MCF 10A (cell line): ENCODE measurements at regions of chr6 and their contacts with region 1.

Region 1: GRCh38 chr6:43629505-43630300 is 639 bp upstream of the GTPBP2 start:
- DNase-seq: peak; percentile 99
- H3K4me3 Mint-ChIP-seq: peak overlapping the region; percentile 99
- H3K27ac Mint-ChIP-seq: peak overlapping the region; percentile 97
- H3K4me1 Mint-ChIP-seq: peaks cover 34% of the 10 kb centered on the region
- H3K27me3 Mint-ChIP-seq: no peaks in the 10 kb centered on the region
- CTCF ChIP-seq: no peak

Region 2: GRCh38 chr6:43481075-43481474 is 148.6 kb before region 1 on chr6:
- CTCF ChIA-PET with region 1: no interaction called
- POLR2A ChIA-PET with region 1: no interaction called
- intact Hi-C with region 1: no loop called
- DNase-seq: peak; percentile 91
- H3K4me3 Mint-ChIP-seq: peak overlapping the region; percentile 54
- H3K27ac Mint-ChIP-seq: peak overlapping the region; percentile 85
- H3K4me1 Mint-ChIP-seq: peaks cover 29% of the 10 kb centered on the region
- H3K27me3 Mint-ChIP-seq: no peaks in the 10 kb centered on the region
- CTCF ChIP-seq: no peak

Region 3: DNA sequence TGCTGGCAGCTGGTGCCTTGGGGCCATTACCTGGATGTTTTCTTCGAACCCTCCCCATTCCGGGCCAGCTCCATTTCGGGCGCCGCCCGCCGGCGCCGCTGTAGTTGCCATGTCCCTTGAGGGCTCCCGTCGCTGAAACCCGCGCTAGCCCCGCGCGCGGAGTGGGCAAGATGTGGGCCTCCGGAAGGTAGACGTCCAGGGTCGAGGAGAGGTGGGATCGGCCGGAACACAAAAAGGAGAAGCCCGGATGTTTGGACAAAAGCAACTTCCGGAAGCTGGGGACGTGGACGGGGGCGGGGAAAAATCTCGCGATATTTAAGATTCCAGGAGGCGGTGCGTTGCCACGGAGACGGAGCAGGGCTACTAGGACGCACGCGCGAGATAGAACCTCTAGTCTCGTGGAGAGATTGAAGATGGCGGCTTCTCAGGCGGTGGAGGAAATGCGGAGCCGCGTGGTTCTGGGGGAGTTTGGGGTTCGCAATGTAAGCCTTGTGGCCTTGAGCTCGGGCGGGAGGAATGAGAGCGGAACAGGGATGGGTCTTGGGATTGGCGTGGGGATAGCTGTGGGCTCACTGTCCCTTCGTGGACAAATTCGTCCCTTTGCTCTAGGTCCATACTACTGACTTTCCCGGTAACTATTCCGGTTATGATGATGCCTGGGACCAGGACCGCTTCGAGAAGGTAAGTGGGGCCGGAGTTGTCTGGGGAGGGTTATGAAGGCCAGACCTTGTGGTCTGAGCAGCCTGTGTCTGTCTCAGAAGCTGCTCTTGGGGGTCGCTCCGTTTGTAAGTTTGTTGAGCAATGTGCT is 112.8 kb before region 1 on chr6 and contains the starts of genes POLR1C and YIPF3:
- CTCF ChIA-PET with region 1: no interaction called
- POLR2A ChIA-PET with region 1: interaction called, 13 read pairs
- intact Hi-C with region 1: no loop called
- DNase-seq: peak; percentile 98
- H3K4me3 Mint-ChIP-seq: no peak within 1 kb of the TSS
- H3K27ac Mint-ChIP-seq: no peak within 1 kb of the TSS
- H3K4me1 Mint-ChIP-seq: peaks cover 13% of the 10 kb centered on the region
- H3K27me3 Mint-ChIP-seq: no peaks in the 10 kb centered on the region
- CTCF ChIP-seq: no peak
- total RNA-seq, gene POLR1C: 54.9 and 63.6 TPM in 2 replicates
- total RNA-seq, gene YIPF3: 65.1 and 72.9 TPM in 2 replicates

Region 4: DNA sequence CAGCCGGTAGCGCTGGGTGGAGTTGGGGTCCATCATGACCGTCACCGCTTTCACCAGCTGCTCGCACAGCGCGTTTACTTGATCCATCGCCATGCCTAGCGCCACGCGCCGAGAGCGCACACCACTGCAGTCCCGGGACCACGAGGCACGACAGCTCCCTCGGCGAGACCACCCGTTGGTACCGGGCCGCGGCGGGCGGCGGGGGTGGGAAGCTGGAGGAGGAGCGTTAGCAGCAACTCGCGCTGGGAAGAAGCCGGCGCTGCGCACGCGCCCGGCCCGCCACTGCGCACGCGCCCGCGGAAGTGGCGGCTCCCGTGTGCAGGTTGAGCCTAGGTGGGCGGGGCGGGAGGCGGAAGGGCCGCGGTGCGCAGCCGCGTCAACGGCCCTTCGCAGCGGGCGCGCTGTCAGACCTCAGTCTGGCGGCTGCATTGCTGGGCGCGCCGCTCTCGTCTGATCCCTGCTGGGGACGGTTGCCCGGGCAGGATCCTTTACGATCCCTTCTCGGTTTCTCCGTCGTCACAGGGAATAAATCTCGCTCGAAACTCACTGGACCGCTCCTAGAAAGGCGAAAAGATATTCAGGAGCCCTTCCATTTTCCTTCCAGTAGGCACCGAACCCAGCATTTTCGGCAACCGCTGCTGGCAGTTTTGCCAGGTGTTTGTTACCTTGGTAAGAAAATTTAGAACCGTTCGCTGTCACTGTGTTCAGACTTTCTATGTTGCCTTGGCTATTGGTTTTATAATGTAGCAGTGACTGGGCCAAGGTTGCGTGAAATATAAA is 53.7 kb before region 1 on chr6 and contains the starts of genes POLH and XPO5:
- CTCF ChIA-PET with region 1: no interaction called
- POLR2A ChIA-PET with region 1: interaction called, 43 read pairs
- intact Hi-C with region 1: no loop called
- DNase-seq: peak; percentile 92
- H3K4me3 Mint-ChIP-seq: peak within 1 kb of the TSS; percentile 100
- H3K27ac Mint-ChIP-seq: peak within 1 kb of the TSS; percentile 90
- H3K4me1 Mint-ChIP-seq: peaks cover 20% of the 10 kb centered on the region
- H3K27me3 Mint-ChIP-seq: no peaks in the 10 kb centered on the region
- CTCF ChIP-seq: peak; percentile 8
- total RNA-seq, gene POLH: 34.5 and 36.7 TPM in 2 replicates
- total RNA-seq, gene XPO5: 92.0 and 98.6 TPM in 2 replicates

Region 5: DNA sequence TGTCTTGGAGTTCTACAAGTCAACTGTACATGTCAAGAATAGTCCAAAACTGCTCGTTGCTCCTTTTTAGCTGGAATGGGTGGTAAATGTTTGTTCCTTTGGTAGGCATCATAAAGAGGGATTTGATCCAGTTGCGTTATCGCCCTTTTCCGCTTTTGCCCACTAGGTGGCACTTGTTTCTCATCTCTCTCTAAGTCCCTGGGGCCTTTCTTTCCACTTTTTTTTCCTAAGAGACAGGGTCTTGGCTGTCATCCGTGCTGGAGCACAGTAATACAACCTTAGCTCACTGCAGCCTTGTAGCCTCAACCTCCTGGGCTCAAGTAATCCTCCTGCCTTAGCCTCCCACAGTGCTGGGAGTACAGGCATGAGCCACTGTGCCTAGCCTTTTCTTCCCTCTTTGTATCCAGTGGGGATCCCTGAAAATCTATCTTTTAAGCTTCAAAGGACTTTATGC is 21.4 kb before region 1 on chr6:
- CTCF ChIA-PET with region 1: interaction called, 6 read pairs
- POLR2A ChIA-PET with region 1: interaction called, 49 read pairs
- intact Hi-C with region 1: no loop called
- DNase-seq: peak; percentile 77
- H3K4me3 Mint-ChIP-seq: no peak overlapping the region
- H3K27ac Mint-ChIP-seq: no peak overlapping the region
- H3K4me1 Mint-ChIP-seq: peaks cover 15% of the 10 kb centered on the region
- H3K27me3 Mint-ChIP-seq: no peaks in the 10 kb centered on the region
- CTCF ChIP-seq: peak; percentile 84

Region 6: DNA sequence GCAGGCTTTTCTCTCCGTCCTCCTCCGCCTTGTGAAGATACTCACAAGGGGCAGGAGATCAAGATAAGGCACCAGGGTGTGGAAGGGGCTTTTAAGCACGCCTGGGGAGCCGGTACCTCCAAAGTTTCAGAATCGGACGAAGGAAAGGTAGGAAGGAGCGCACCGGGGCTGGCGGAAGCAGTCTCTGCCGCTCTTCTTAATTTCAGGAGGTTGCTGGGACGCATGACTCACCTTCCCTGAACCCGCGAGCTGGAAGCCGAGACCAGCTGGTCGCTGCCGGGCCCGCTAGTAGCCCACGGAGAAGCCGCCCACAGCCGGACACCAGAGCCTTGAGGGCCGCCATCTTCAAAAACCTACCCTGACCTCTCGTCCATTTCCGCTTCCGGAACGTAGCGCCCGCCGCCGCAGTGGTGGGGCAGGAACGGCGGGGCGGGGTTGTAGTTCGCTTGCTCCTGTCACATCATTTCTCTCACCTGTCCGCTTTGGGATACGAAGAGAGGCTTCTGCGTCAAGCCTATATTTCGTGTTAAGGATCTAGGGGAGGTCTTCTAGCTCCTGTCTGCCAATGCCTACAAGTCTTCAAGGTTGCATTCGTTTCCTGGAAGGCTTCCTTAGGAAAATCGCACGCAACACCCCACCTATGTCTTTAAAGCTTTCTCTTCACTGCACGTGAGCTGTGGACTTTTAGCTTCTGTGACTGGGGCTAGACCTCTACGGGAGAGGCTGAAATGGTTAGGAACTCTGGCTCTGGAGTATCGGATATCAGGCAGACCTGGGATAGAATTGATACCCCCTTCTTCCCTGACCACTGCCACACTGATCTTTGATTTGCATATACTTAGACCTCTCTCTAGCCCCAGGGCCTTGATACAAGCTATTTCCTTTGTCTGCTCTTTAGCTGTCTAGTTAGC is 58.0 kb after region 1 on chr6 and contains the start of gene MRPS18A:
- CTCF ChIA-PET with region 1: no interaction called
- POLR2A ChIA-PET with region 1: interaction called, 13 read pairs
- intact Hi-C with region 1: no loop called
- DNase-seq: peak; percentile 83
- H3K4me3 Mint-ChIP-seq: peak within 1 kb of the TSS; percentile 90
- H3K27ac Mint-ChIP-seq: peak within 1 kb of the TSS; percentile 92
- H3K4me1 Mint-ChIP-seq: peaks cover 33% of the 10 kb centered on the region
- H3K27me3 Mint-ChIP-seq: no peaks in the 10 kb centered on the region
- CTCF ChIP-seq: no peak
- total RNA-seq, gene MRPS18A: 69.1 and 79.5 TPM in 2 replicates

Region 7: DNA sequence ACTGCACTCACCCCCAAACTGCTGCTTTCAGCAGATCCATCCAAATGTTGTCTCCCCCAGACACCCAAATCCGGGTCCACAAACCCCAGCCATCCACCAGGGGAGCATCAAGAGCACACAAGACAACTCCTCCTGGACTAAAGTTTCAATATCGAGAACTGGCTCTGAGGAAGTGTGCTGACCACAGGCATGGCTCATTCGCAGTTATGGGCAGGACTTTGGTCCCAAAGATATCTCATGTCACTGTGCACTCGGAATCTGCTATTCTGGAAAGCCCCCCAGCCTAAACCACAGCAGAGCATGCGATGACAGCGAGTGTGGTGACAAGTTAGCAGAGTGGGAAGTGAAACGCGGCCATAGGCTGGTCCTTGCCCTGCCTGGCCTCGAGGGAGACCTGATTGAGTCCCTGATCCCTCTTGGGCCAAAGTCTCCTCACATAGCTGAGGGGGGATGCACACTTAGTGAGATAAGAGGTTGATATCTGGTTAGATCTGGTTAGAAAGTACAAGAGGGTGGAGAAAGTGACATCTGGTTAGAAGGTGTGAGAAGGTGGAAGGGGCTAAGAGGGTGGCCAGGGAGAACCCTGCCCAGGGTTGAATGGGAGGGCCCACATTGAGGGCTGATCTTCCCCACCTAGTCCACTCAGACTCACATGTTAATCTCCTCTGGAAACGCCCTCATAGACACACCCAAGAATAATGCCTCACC is 347.9 kb after region 1 on chr6:
- CTCF ChIA-PET with region 1: no interaction called
- POLR2A ChIA-PET with region 1: no interaction called
- intact Hi-C with region 1: no loop called
- DNase-seq: no peak
- H3K4me3 Mint-ChIP-seq: no peak overlapping the region
- H3K27ac Mint-ChIP-seq: no peak overlapping the region
- H3K4me1 Mint-ChIP-seq: peaks cover 32% of the 10 kb centered on the region
- H3K27me3 Mint-ChIP-seq: no peaks in the 10 kb centered on the region
- CTCF ChIP-seq: no peak

Region 8: GRCh38 chr6:44257025-44257752 is 627.5 kb after region 1 on chr6 and contains the start of gene SLC35B2:
- CTCF ChIA-PET with region 1: no interaction called
- POLR2A ChIA-PET with region 1: no interaction called
- intact Hi-C with region 1: no loop called
- DNase-seq: peak; percentile 47
- H3K4me3 Mint-ChIP-seq: peak within 1 kb of the TSS; percentile 84
- H3K27ac Mint-ChIP-seq: peak within 1 kb of the TSS; percentile 57
- H3K4me1 Mint-ChIP-seq: peaks cover 50% of the 10 kb centered on the region
- H3K27me3 Mint-ChIP-seq: no peaks in the 10 kb centered on the region
- CTCF ChIP-seq: peak; percentile 78
- total RNA-seq, gene SLC35B2: 27.1 and 31.3 TPM in 2 replicates

Region 9: DNA sequence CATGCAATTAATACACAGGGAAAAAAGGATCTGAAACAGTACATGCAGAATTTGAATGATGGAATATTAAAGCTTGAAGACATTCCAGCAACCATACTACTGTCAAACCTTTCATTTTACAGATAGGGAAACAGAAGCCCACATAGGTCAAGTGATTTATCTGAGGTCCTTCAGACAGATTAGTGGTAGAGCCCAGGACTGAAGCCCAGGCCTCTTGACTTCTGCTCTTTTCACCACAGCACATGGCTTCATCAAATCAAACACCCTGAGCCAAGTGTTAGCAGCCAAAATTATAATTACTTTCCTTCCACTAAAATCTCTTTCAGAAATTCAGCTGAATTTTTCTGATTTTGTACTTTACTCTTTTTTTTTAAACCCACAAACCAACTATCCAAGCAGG is 1262.9 kb after region 1 on chr6:
- CTCF ChIA-PET with region 1: no interaction called
- POLR2A ChIA-PET with region 1: no interaction called
- intact Hi-C with region 1: no loop called
- DNase-seq: no peak
- H3K4me3 Mint-ChIP-seq: no peak overlapping the region
- H3K27ac Mint-ChIP-seq: peak overlapping the region; percentile 46
- H3K4me1 Mint-ChIP-seq: no peaks in the 10 kb centered on the region
- H3K27me3 Mint-ChIP-seq: no peaks in the 10 kb centered on the region
- CTCF ChIP-seq: no peak